ENCODE measurements at regions of chr14 and their contacts with region 1.

Region 1: GRCh38 chr14:72236629-72237028 is 304.4 kb downstream of the RGS6 start:
- DNase-seq: no peak
- ATAC-seq: no peak
- H3K4me3 ChIP-seq: no peak overlapping the region
- H3K27ac ChIP-seq: no peak overlapping the region
- H3K4me1 ChIP-seq: no peaks in the 10 kb centered on the region
- H3K27me3 ChIP-seq: no peaks in the 10 kb centered on the region
- CTCF ChIP-seq: no peak
- POLR2A ChIP-seq: no peak
- RAD21 ChIP-seq: no peak

Region 2: DNA sequence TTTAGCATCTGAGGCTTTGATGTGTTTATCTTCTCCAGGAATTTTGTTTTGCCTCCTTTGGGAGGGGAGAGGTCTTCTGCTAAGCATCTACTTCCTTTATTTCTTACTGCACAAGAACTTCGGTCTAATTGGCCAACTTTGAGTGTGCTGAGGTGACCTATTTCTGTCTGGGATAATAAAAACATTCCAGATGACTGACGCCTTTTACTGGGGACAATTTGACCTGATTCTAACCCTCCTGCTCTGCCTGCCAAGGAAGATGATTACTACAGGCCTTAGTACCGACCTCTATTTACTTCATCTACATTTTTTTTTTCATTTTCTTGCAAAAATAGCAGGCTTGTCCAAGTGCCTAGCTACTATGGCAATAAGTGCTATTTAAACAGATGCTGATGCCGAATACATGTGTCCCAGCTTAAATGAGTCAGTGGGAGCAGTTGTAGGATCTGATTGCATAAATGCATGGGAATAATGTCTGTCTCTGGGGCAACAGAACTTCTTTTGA is 50.2 kb before region 1 on chr14:
- CTCF ChIA-PET with region 1: no interaction called
- POLR2A ChIA-PET with region 1: no interaction called
- dilution Hi-C with region 1: no loop called
- in situ Hi-C with region 1: no loop called
- intact Hi-C with region 1: loop called (anchors 2 kb)
- DNase-seq: no peak
- ATAC-seq: no peak
- H3K4me3 ChIP-seq: no peak overlapping the region
- H3K27ac ChIP-seq: no peak overlapping the region
- H3K4me1 ChIP-seq: no peaks in the 10 kb centered on the region
- H3K27me3 ChIP-seq: no peaks in the 10 kb centered on the region
- CTCF ChIP-seq: no peak
- POLR2A ChIP-seq: no peak
- RAD21 ChIP-seq: no peak

Region 3: DNA sequence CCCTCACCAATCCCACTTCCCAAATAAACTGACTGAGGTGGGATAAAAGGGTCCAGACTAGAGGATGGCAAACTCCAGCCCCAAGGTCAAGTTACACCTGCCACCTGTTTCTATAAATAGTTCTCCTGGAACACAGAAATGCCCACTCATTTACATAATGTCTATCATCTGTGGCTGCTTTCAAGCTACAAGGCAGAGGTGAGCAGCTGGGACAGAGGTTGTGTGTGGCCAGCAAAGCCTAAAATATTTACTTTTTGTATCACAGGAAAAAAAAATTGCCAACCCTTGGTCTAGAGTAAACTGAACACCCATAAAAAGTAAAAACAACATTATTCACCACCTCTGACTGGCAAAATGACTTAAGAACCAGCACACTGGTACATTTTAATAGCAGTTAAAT is 35.0 kb before region 1 on chr14:
- CTCF ChIA-PET with region 1: no interaction called
- POLR2A ChIA-PET with region 1: no interaction called
- dilution Hi-C with region 1: no loop called
- in situ Hi-C with region 1: no loop called
- intact Hi-C with region 1: no loop called
- DNase-seq: no peak
- ATAC-seq: no peak
- H3K4me3 ChIP-seq: no peak overlapping the region
- H3K27ac ChIP-seq: no peak overlapping the region
- H3K4me1 ChIP-seq: no peaks in the 10 kb centered on the region
- H3K27me3 ChIP-seq: no peaks in the 10 kb centered on the region
- CTCF ChIP-seq: no peak
- POLR2A ChIP-seq: no peak
- RAD21 ChIP-seq: no peak

Measured in IMR-90 (cell line).